ENCODE measurements at regions of chr11 and their contacts with region 1.

Region 1: DNA sequence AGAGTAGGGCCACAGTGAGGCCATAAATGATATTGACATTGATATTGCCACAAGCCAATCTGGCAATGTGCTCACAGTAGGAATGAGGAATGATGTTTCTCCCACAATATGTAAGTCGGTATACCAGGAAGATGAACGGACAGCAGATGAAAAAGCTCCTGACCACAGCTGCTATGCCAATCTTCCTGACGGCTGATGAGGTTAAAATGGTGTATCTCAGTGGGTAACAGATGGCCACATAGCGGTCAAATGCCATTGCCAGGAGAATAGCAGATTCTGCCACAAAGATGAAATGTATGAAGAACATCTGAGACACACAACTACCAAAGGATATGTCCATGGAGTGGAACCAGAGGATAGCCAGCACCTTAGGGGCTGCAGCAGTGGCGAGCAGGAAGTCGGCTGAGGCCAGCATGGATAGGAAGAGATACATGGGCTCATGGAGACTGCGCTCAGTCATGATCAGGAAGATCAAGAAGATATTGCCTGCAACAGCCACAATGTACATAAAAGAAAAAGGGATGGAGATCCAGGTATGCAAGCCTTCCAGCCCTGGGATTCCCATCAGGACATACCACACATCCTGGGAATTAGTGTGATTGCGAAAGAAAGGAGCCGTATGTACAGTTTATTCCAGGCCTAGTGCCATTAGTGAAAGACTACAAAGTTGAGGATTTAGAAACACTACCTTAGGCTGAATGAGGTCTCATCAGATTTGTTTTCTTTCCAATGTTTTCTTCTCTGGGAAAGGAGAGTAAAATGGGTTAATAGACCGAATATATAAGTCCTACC is 22.2 kb downstream of the OR51V1 start:
- DNase-seq: no peak
- ATAC-seq: no peak
- H3K4me3 ChIP-seq: no peak overlapping the region
- H3K27ac ChIP-seq: no peak overlapping the region
- H3K4me1 ChIP-seq: no peaks in the 10 kb centered on the region
- H3K27me3 ChIP-seq: peaks cover 0 to 3% (median 0%) of the 10 kb centered on the region in 7 donors
- CTCF ChIP-seq: no peak

Region 2: GRCh38 chr11:5269715-5270147 is 91.5 kb after region 1 on chr11 and contains the start of gene HBE1:
- intact Hi-C with region 1: no loop called
- DNase-seq: no peak
- ATAC-seq: no peak
- H3K4me3 ChIP-seq: no peak within 1 kb of the TSS
- H3K27ac ChIP-seq: no peak within 1 kb of the TSS
- H3K4me1 ChIP-seq: no peaks in the 10 kb centered on the region
- H3K27me3 ChIP-seq: no peaks in the 10 kb centered on the region
- CTCF ChIP-seq: no peak
- total RNA-seq, gene HBE1: not detected

Region 3: DNA sequence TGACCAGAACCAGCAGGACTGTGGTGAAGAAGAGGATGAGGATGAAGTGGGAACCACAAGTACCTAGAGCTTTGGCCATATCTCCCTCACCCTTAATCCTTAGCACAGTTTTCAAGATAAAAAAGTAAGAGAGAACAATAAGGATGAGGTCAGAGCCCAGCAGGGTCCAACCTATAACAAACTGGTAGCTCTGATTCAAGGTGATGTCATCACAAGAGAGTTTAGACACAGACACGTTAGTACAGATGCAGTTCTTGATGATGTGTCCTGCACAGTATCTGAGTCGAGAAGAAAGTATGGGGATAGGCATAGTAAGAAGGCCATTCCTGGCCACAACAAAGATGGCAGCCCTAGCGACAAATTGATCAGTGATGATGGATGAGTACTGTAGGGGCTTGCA is 789.5 kb after region 1 on chr11:
- intact Hi-C with region 1: loop called in 1 of 10 experiments (anchors 10 kb)
- DNase-seq: no peak
- ATAC-seq: no peak
- H3K4me3 ChIP-seq: no peak overlapping the region
- H3K27ac ChIP-seq: no peak overlapping the region
- H3K4me1 ChIP-seq: no peaks in the 10 kb centered on the region
- H3K27me3 ChIP-seq: peaks cover 0 to 2% (median 0%) of the 10 kb centered on the region in 7 donors
- CTCF ChIP-seq: no peak

Measured in heart right ventricle (tissue), 16 donors.